HCT116 (cell line): ENCODE measurements at regions of chr6 and their contacts with region 1.

Region 1: GRCh38 chr6:152863618-152864326 is 113.2 kb downstream of the VIP start:
- DNase-seq: peak; percentile 65
- ATAC-seq: peak; percentile 98
- H3K4me3 ChIP-seq: no peak overlapping the region
- H3K27ac ChIP-seq: no peak overlapping the region
- H3K4me1 ChIP-seq: no peaks in the 10 kb centered on the region
- H3K27me3 ChIP-seq: peaks cover 42% of the 10 kb centered on the region
- CTCF ChIP-seq: peak; percentile 53 to 75 (median 66)
- POLR2A ChIP-seq: no peak
- RAD21 ChIP-seq: peak; percentile 87

Region 2: GRCh38 chr6:151807533-151808370 is 1056.0 kb before region 1 on chr6 and contains the start of gene ESR1:
- CTCF ChIA-PET with region 1: no interaction called
- POLR2A ChIA-PET with region 1: no interaction called
- RAD21 ChIA-PET with region 1: no interaction called
- intact Hi-C with region 1: no loop called
- DNase-seq: no peak
- ATAC-seq: no peak
- H3K4me3 ChIP-seq: no peak within 1 kb of the TSS
- H3K27ac ChIP-seq: no peak within 1 kb of the TSS
- H3K4me1 ChIP-seq: no peaks in the 10 kb centered on the region
- H3K27me3 ChIP-seq: peaks cover 36% of the 10 kb centered on the region
- CTCF ChIP-seq: no peak
- POLR2A ChIP-seq: no peak
- RAD21 ChIP-seq: no peak
- total RNA-seq, gene ESR1: 0.17 TPM

Region 3: GRCh38 chr6:152750694-152751093 is 113.1 kb before region 1 on chr6 and contains the start of gene VIP:
- CTCF ChIA-PET with region 1: interaction called, 3 read pairs
- POLR2A ChIA-PET with region 1: no interaction called
- RAD21 ChIA-PET with region 1: no interaction called
- intact Hi-C with region 1: loop called (anchors 5 kb)
- DNase-seq: no peak
- ATAC-seq: 0 out of 2 replicates have a peak, but pooled peaks have one; percentile 46
- H3K4me3 ChIP-seq: no peak within 1 kb of the TSS
- H3K27ac ChIP-seq: no peak within 1 kb of the TSS
- H3K4me1 ChIP-seq: no peaks in the 10 kb centered on the region; a peak in 1 of 4 replicates
- H3K27me3 ChIP-seq: peaks cover 41% of the 10 kb centered on the region
- CTCF ChIP-seq: no peak
- POLR2A ChIP-seq: no peak
- RAD21 ChIP-seq: no peak
- total RNA-seq, gene VIP: not detected

Region 4: DNA sequence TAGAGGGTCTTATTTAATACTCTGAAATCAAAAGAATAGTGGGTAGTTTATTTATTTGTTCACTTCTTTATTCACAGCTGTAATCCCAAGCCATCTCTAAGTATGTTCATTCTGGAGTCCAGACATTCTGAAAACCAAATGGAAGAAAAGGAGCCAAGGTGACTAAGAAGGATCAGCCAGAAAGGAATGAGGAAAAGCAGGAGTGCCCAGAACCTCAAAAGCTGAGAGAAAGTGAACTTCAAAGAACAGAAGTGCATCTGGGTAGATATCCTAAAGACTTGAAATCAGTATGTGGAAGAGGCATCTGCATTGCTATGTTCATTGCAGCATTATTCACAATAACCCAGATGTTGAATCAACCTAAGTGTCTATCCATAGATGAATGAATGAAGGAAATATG is 18.4 kb before region 1 on chr6:
- CTCF ChIA-PET with region 1: no interaction called
- POLR2A ChIA-PET with region 1: no interaction called
- RAD21 ChIA-PET with region 1: no interaction called
- intact Hi-C with region 1: no loop called
- DNase-seq: no peak
- ATAC-seq: no peak
- H3K4me3 ChIP-seq: no peak overlapping the region
- H3K27ac ChIP-seq: no peak overlapping the region
- H3K4me1 ChIP-seq: no peaks in the 10 kb centered on the region
- H3K27me3 ChIP-seq: peaks cover 25% of the 10 kb centered on the region
- CTCF ChIP-seq: no peak
- POLR2A ChIP-seq: no peak
- RAD21 ChIP-seq: no peak

Region 5: GRCh38 chr6:152897799-152898399 is 34.1 kb after region 1 on chr6:
- CTCF ChIA-PET with region 1: interaction called, 3 read pairs
- POLR2A ChIA-PET with region 1: no interaction called
- RAD21 ChIA-PET with region 1: no interaction called
- intact Hi-C with region 1: loop called (anchors 2 kb)
- DNase-seq: peak; percentile 42
- ATAC-seq: peak; percentile 100
- H3K4me3 ChIP-seq: no peak overlapping the region
- H3K27ac ChIP-seq: no peak overlapping the region
- H3K4me1 ChIP-seq: no peaks in the 10 kb centered on the region
- H3K27me3 ChIP-seq: peaks cover 45% of the 10 kb centered on the region
- CTCF ChIP-seq: peak; percentile 36 to 91 (median 84); a peak in 5 of 6 replicates
- POLR2A ChIP-seq: no peak
- RAD21 ChIP-seq: peak; percentile 49